Panc1 (cell line): ENCODE measurements at regions of chr10 and their contacts with region 1.

Region 1: DNA sequence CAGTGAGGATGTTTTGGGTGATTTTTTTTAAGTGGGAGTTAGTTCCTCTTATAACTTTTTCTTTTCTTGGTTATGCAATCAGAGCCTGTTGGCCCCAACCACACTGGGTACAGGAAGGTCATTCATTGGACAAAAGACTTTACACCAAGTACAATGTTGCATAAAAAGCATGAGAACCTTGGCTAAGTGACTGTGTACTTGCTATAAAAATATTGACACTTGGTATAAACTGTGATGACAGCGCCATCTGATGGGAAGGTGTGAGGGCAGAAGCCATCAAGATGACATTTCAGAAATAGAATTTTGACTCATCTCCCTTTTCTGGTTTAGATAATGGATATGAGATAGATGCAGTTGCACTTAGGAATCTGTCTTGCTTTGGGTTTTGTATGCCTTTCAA is 126.4 kb upstream of the CCDC6 start:
- DNase-seq: peak; percentile 38
- ATAC-seq: peak; percentile 77
- H3K4me3 ChIP-seq: no peak overlapping the region
- H3K27ac ChIP-seq: no peak overlapping the region
- H3K4me1 ChIP-seq: no peaks in the 10 kb centered on the region
- H3K27me3 ChIP-seq: 0 out of 2 replicates have a peak, but pooled peaks cover 3% of the 10 kb centered on the region
- CTCF ChIP-seq: peak; percentile 75

Region 2: GRCh38 chr10:59240582-59241183 is 792.0 kb before region 1 on chr10:
- CTCF ChIA-PET with region 1: no interaction called
- POLR2A ChIA-PET with region 1: no interaction called
- in situ Hi-C with region 1: no loop called
- intact Hi-C with region 1: loop called (anchors 10 kb)
- DNase-seq: no peak
- ATAC-seq: no peak
- H3K4me3 ChIP-seq: no peak overlapping the region
- H3K27ac ChIP-seq: no peak overlapping the region
- H3K4me1 ChIP-seq: no peaks in the 10 kb centered on the region
- H3K27me3 ChIP-seq: no peaks in the 10 kb centered on the region
- CTCF ChIP-seq: peak; percentile 65; the same call in 1 of the 2 replicates

Region 3: GRCh38 chr10:59830601-59831259 is 202.0 kb before region 1 on chr10:
- CTCF ChIA-PET with region 1: no interaction called
- POLR2A ChIA-PET with region 1: no interaction called
- in situ Hi-C with region 1: no loop called
- intact Hi-C with region 1: loop called (anchors 2 kb)
- DNase-seq: peak; percentile 25
- ATAC-seq: peak; percentile 94
- H3K4me3 ChIP-seq: no peak overlapping the region
- H3K27ac ChIP-seq: no peak overlapping the region
- H3K4me1 ChIP-seq: no peaks in the 10 kb centered on the region
- H3K27me3 ChIP-seq: no peaks in the 10 kb centered on the region
- CTCF ChIP-seq: peak; percentile 91

Region 4: DNA sequence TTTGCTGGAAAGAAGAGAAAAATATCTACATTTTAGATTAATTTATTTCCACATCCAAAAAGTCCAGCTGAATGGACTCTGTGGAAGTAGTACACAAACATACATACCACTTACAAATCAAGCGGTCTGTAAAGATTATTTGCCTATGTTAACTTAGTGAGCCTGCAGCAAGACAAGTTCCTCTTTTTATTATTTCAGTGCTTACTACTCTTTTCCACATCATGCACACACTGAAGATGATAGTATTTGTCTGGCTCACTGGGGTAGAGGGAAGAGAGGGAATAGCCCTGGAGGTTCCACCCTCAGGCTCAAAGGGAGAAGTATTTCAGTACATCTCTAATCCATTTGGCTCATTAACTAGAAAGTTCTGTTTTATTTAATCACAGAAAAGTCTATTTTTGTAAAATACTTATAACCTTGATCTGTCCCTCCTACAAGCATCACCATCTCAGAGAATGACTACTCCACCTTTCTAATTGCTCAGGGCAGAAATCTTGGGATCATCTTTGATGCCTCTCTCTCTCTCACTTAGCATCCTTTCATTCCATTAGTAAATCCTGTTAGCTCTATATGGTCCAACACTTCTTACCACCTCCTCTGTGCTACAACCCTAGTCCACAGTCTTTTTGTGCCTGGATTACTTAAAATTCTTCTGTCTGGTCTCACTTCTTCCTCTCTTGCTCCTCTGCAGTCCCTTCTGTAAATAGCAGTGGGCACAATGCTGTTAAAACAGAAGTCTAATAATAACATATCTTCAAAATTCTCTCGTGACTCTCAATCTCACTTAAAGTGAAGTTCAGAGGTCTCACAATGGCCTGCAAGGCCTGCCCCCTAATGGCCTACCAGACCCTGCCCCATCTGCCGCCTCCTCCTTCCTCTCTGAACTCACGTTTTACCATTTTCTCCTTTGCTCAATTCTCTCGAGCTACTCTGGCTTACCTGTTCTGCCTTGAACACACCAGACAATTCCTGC is 62.0 kb before region 1 on chr10:
- CTCF ChIA-PET with region 1: no interaction called
- POLR2A ChIA-PET with region 1: no interaction called
- in situ Hi-C with region 1: no loop called
- intact Hi-C with region 1: loop called (anchors 10 kb)
- DNase-seq: no peak
- ATAC-seq: no peak
- H3K4me3 ChIP-seq: no peak overlapping the region
- H3K27ac ChIP-seq: no peak overlapping the region
- H3K4me1 ChIP-seq: no peaks in the 10 kb centered on the region
- H3K27me3 ChIP-seq: no peaks in the 10 kb centered on the region
- CTCF ChIP-seq: no peak